ENCODE measurements at regions of chr7 and their contacts with region 1.

Region 1: GRCh38 chr7:21261627-21262594 is 166.0 kb upstream of the SP4 start:
- DNase-seq: peak; percentile 67 to 71
- H3K4me3 ChIP-seq: no peak overlapping the region
- H3K4me3 Mint-ChIP-seq: no peak overlapping the region
- H3K27ac Mint-ChIP-seq: no peak overlapping the region
- H3K4me1 ChIP-seq: no peaks in the 10 kb centered on the region
- H3K4me1 Mint-ChIP-seq: no peaks in the 10 kb centered on the region
- H3K27me3 ChIP-seq: no peaks in the 10 kb centered on the region
- H3K27me3 Mint-ChIP-seq: no peaks in the 10 kb centered on the region
- CTCF ChIP-seq: peak; percentile 78 to 84

Region 2: GRCh38 chr7:21507626-21508343 is 245.9 kb after region 1 on chr7:
- CTCF ChIA-PET with region 1: interaction called, 3 read pairs
- POLR2A ChIA-PET with region 1: no interaction called
- intact Hi-C with region 1: loop called (anchors 1 kb)
- DNase-seq: peak in 1 of 2 experiments; percentile 49
- H3K4me3 ChIP-seq: no peak overlapping the region
- H3K4me3 Mint-ChIP-seq: no peak overlapping the region
- H3K27ac Mint-ChIP-seq: no peak overlapping the region
- H3K4me1 ChIP-seq: peaks cover 17% of the 10 kb centered on the region; the same call in 1 of the 2 replicates
- H3K4me1 Mint-ChIP-seq: peaks cover 13% of the 10 kb centered on the region
- H3K27me3 ChIP-seq: no peaks in the 10 kb centered on the region
- H3K27me3 Mint-ChIP-seq: no peaks in the 10 kb centered on the region
- CTCF ChIP-seq: peak; percentile 53 to 54

Region 3: GRCh38 chr7:21568762-21569161 is 306.9 kb after region 1 on chr7:
- CTCF ChIA-PET with region 1: no interaction called
- POLR2A ChIA-PET with region 1: no interaction called
- intact Hi-C with region 1: loop called (anchors 1 kb)
- DNase-seq: peak in 1 of 2 experiments; percentile 32
- H3K4me3 ChIP-seq: no peak overlapping the region
- H3K4me3 Mint-ChIP-seq: no peak overlapping the region
- H3K27ac Mint-ChIP-seq: no peak overlapping the region
- H3K4me1 ChIP-seq: no peaks in the 10 kb centered on the region
- H3K4me1 Mint-ChIP-seq: no peaks in the 10 kb centered on the region
- H3K27me3 ChIP-seq: no peaks in the 10 kb centered on the region
- H3K27me3 Mint-ChIP-seq: no peaks in the 10 kb centered on the region
- CTCF ChIP-seq: peak; percentile 12 to 36

Measured in Caco-2 (cell line).